ENCODE measurements at regions of chr11 and their contacts with region 1.

Region 1: DNA sequence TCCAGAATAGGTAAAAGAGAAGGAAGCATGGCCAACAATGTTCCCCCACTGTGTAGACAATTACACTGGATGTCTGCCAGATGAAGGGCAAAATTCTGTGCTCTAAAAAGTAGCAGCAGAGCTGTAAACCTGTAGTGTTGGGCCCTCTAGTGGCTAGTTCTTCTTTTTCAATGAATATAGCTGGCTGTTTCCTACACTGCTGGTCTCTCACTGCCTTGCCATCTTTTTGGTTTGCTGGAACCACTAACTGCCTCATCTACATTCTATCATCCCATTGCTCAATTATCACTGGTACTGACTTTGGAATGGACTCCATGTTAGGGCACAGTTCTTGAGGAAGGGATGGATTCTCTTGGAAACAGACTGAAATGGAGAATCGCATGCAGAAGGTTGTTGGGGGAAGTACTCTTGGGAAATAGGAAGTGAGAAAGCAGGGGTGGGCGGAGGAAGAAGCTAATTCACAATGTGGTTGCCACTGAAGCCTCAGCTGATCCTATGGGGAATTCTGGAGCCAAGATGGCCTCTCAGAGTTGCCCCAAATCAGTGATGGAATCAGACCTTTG is 17.9 kb downstream of the KCNE3 start:
- ATAC-seq: peak; percentile 72 to 96 (median 82)
- H3K4me3 ChIP-seq: no peak overlapping the region
- H3K27ac ChIP-seq: no peak overlapping the region
- H3K4me1 ChIP-seq: no peaks in the 10 kb centered on the region

Region 2: GRCh38 chr11:74288161-74288560 is 161.3 kb before region 1 on chr11:
- in situ Hi-C with region 1: no loop called
- ATAC-seq: peak in 3 of 8 experiments; percentile 52 to 89 (median 77)
- H3K4me3 ChIP-seq: no peak overlapping the region
- H3K27ac ChIP-seq: no peak overlapping the region
- H3K4me1 ChIP-seq: peaks cover 0 to 2% of the 10 kb centered on the region in 2 donors

Region 3: DNA sequence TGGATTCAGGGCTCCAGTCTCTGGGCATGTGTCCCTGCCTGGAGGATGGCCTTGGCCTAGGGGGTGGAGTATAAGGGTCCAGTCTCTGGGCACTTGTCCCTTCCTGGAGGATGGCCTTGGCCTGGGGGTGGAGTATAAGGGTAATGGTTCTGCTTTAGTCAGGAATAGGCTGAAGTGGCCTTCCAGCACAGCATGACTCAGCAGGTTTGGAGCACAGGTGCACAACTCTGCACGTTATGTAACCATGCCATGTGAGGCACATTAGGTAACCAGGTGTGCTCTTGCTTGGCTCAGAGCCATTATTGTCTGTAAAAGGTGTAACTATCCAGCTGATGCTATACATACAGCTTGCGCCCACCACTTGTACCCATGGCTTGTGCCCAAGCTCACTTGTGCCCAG is 94.5 kb after region 1 on chr11:
- in situ Hi-C with region 1: loop called in 1 of 9 experiments (anchors 25 kb)
- ATAC-seq: no peak
- H3K4me3 ChIP-seq: no peak overlapping the region
- H3K27ac ChIP-seq: no peak overlapping the region
- H3K4me1 ChIP-seq: no peaks in the 10 kb centered on the region

Region 4: DNA sequence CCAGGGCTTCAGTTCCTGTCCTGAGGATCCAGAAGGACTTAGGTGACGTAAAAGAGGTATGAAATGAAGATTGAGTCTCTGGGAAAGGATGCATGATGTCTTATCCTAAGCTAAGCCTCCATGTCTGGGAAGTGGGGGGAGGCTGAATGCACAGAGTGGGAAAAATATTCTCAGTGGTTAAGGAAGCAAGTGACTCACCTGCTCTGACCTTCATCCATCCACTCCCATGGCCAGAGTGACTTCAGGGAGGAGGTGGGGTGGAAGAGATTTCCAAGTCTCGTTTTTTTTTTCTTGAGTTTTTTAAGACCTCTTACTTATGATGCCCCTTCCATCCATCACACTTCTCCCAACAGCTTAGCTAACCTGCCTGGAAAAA is 110.5 kb after region 1 on chr11:
- in situ Hi-C with region 1: loop called in 1 of 9 experiments (anchors 10 kb)
- ATAC-seq: no peak
- H3K4me3 ChIP-seq: no peak overlapping the region
- H3K27ac ChIP-seq: no peak overlapping the region
- H3K4me1 ChIP-seq: no peaks in the 10 kb centered on the region

Region 5: GRCh38 chr11:74570266-74571061 is 121.0 kb after region 1 on chr11:
- in situ Hi-C with region 1: loop called in 3 of 9 experiments (anchors 10 kb)
- ATAC-seq: peak in 4 of 8 experiments; percentile 66 to 87 (median 78)
- H3K4me3 ChIP-seq: no peak overlapping the region
- H3K27ac ChIP-seq: no peak overlapping the region
- H3K4me1 ChIP-seq: no peaks in the 10 kb centered on the region